ENCODE measurements at regions of chr2 and their contacts with region 1.

Region 1: GRCh38 chr2:145919477-145919876 is 1399.6 kb upstream of the ZEB2 start:
- DNase-seq: peak; percentile 8
- ATAC-seq: 0 out of 2 replicates have a peak, but pooled peaks have one; percentile 49
- H3K4me3 ChIP-seq: no peak overlapping the region
- H3K27ac ChIP-seq: no peak overlapping the region
- H3K4me1 ChIP-seq: no peaks in the 10 kb centered on the region
- H3K27me3 ChIP-seq: no peaks in the 10 kb centered on the region
- CTCF ChIP-seq: peak; percentile 34
- POLR2A ChIP-seq: no peak
- RAD21 ChIP-seq: peak; percentile 26; the same call in 1 of the 2 replicates

Region 2: GRCh38 chr2:144524118-144524957 is 1395.1 kb before region 1 on chr2:
- CTCF ChIA-PET with region 1: no interaction called
- POLR2A ChIA-PET with region 1: no interaction called
- dilution Hi-C with region 1: no loop called
- in situ Hi-C with region 1: no loop called
- intact Hi-C with region 1: loop called (anchors 2 kb)
- DNase-seq: no peak
- ATAC-seq: peak; percentile 55
- H3K4me3 ChIP-seq: peak overlapping the region; percentile 83
- H3K27ac ChIP-seq: peak overlapping the region; percentile 70
- H3K4me1 ChIP-seq: peaks cover 4% of the 10 kb centered on the region; the same call in 1 of the 2 replicates
- H3K27me3 ChIP-seq: no peaks in the 10 kb centered on the region
- CTCF ChIP-seq: no peak
- POLR2A ChIP-seq: no peak
- RAD21 ChIP-seq: no peak

Region 3: DNA sequence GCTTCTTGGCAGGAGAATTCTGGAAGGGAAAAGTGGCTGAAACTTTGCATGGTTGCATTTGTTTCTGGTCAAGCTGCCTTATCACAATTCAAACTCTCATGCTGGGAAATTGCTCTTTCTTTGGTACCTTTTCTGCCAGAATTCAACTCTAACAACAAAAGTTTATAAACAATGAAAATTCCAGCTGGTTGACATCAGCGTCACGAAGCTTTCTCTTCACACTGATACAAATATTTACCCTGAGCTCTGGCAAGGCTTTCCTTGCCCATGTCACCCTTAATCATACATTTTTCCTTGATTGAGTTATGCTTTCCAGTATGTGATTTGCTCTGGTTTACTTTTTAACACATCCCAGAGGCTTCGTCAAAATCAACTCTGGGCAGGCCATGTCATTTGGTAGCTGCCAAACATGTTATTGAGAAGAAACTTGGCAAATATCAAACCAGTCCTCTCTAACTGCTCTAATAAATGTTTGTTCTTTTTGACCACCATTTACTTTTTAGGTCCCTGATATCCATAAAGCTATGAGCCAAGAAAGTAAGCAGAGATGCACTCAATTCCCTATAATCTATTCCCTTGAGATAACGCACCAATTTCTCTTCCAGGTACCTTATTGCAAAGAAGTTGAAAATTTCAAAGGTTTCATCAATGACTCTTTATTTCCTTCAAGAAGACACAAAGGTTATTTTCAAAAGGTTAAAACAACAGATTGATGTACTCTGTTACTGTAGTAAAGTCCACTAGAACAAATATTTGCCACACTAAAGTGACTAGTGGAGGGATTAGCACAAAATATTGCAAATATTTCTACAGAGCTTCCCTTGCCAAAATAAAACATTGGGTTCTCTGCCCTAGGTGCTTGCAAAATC is 158.5 kb before region 1 on chr2:
- CTCF ChIA-PET with region 1: no interaction called
- POLR2A ChIA-PET with region 1: no interaction called
- dilution Hi-C with region 1: no loop called
- in situ Hi-C with region 1: no loop called
- intact Hi-C with region 1: loop called (anchors 5 kb)
- DNase-seq: peak; percentile 79
- ATAC-seq: peak; percentile 63
- H3K4me3 ChIP-seq: no peak overlapping the region
- H3K27ac ChIP-seq: peak overlapping the region; percentile 86; the same call in 1 of the 2 replicates
- H3K4me1 ChIP-seq: peaks cover 12% of the 10 kb centered on the region
- H3K27me3 ChIP-seq: no peaks in the 10 kb centered on the region
- CTCF ChIP-seq: no peak
- POLR2A ChIP-seq: no peak
- RAD21 ChIP-seq: no peak

Region 4: GRCh38 chr2:145771525-145771924 is 148.0 kb before region 1 on chr2:
- CTCF ChIA-PET with region 1: no interaction called
- POLR2A ChIA-PET with region 1: no interaction called
- dilution Hi-C with region 1: no loop called
- in situ Hi-C with region 1: no loop called
- intact Hi-C with region 1: no loop called
- DNase-seq: no peak
- ATAC-seq: no peak
- H3K4me3 ChIP-seq: no peak overlapping the region
- H3K27ac ChIP-seq: no peak overlapping the region
- H3K4me1 ChIP-seq: no peaks in the 10 kb centered on the region
- H3K27me3 ChIP-seq: no peaks in the 10 kb centered on the region
- CTCF ChIP-seq: no peak
- POLR2A ChIP-seq: no peak
- RAD21 ChIP-seq: no peak

Region 5: GRCh38 chr2:145887915-145888314 is 31.6 kb before region 1 on chr2:
- CTCF ChIA-PET with region 1: no interaction called
- POLR2A ChIA-PET with region 1: no interaction called
- dilution Hi-C with region 1: no loop called
- in situ Hi-C with region 1: no loop called
- intact Hi-C with region 1: no loop called
- DNase-seq: no peak
- ATAC-seq: no peak
- H3K4me3 ChIP-seq: no peak overlapping the region
- H3K27ac ChIP-seq: no peak overlapping the region
- H3K4me1 ChIP-seq: no peaks in the 10 kb centered on the region
- H3K27me3 ChIP-seq: no peaks in the 10 kb centered on the region
- CTCF ChIP-seq: no peak
- POLR2A ChIP-seq: no peak
- RAD21 ChIP-seq: no peak

Region 6: DNA sequence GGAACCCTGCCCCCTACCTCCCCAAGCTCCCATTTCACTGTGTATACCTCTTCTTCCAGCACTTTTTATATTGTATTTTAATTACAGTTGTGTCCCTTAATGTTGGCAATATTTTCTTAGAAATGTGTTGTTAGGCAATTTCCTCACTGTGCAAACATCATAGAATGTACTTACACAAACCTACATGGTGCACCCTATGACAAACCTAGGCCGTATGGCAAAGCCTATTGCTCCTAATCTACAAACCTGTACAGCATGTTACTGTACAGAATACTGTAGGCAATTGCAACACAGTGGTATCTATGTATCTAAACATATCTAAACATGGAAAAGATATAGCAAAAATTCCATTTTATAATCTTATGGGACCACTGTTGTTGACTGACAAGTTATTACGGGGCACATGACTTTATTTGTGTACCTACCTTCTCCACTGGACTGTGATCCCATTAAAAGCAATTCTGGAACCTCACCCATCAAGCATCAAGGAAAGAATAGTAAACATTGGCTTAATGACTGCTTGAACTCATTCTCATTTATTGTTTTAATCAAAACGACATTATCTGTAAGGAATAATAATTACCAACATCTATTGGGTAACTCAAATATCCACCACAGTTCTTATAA is 241.9 kb after region 1 on chr2:
- CTCF ChIA-PET with region 1: no interaction called
- POLR2A ChIA-PET with region 1: no interaction called
- dilution Hi-C with region 1: no loop called
- in situ Hi-C with region 1: no loop called
- intact Hi-C with region 1: no loop called
- DNase-seq: no peak
- ATAC-seq: no peak
- H3K4me3 ChIP-seq: no peak overlapping the region
- H3K27ac ChIP-seq: no peak overlapping the region
- H3K4me1 ChIP-seq: no peaks in the 10 kb centered on the region
- H3K27me3 ChIP-seq: no peaks in the 10 kb centered on the region; the same call in 1 of the 2 replicates
- CTCF ChIP-seq: no peak
- POLR2A ChIP-seq: no peak
- RAD21 ChIP-seq: no peak

Measured in IMR-90 (cell line).